ENCODE measurements at regions of chr4 and their contacts with region 1.

Region 1: GRCh38 chr4:134470544-134470943 is 269.0 kb upstream of the PABPC4L start:
- DNase-seq: peak; percentile 42 to 44
- H3K4me3 ChIP-seq: no peak overlapping the region
- H3K4me3 Mint-ChIP-seq: no peak overlapping the region
- H3K27ac Mint-ChIP-seq: no peak overlapping the region
- H3K4me1 ChIP-seq: no peaks in the 10 kb centered on the region
- H3K4me1 Mint-ChIP-seq: no peaks in the 10 kb centered on the region
- H3K27me3 ChIP-seq: no peaks in the 10 kb centered on the region
- H3K27me3 Mint-ChIP-seq: no peaks in the 10 kb centered on the region
- CTCF ChIP-seq: peak; percentile 44 to 56

Region 2: GRCh38 chr4:134650461-134650860 is 179.9 kb after region 1 on chr4:
- CTCF ChIA-PET with region 1: no interaction called
- POLR2A ChIA-PET with region 1: no interaction called
- intact Hi-C with region 1: loop called (anchors 1 kb)
- DNase-seq: no peak
- H3K4me3 ChIP-seq: no peak overlapping the region
- H3K4me3 Mint-ChIP-seq: no peak overlapping the region
- H3K27ac Mint-ChIP-seq: no peak overlapping the region
- H3K4me1 ChIP-seq: no peaks in the 10 kb centered on the region
- H3K4me1 Mint-ChIP-seq: no peaks in the 10 kb centered on the region
- H3K27me3 ChIP-seq: no peaks in the 10 kb centered on the region
- H3K27me3 Mint-ChIP-seq: no peaks in the 10 kb centered on the region
- CTCF ChIP-seq: no peak

Region 3: DNA sequence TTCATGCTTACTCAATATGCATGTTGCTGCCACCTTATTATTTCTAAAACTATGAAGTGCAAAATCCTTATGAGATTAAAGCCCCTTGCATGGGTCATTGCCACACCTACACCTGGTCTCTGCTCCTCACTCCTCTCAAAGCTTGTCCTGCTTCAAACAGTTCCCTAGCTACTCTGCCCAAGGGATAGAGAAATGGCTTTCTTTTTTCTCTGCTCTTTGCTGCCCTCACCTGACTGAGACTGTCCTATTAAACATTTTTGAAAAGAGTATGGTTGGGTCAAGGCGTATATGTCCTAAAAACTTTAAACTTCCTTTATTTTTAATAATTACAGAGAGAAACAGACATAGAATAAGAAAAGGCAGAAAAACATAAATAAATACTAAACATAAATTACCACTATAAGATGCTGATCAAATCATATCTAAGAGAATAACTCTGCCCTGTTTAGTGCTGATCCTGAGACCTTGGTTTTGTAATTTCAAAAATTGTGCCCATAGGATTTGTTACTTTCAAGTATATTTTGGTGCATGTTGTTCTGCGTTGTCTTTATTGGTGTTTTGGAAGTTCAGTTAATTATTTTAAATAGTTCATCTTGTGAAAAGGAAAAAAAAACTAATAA is 436.0 kb after region 1 on chr4:
- CTCF ChIA-PET with region 1: interaction called, 7 read pairs
- POLR2A ChIA-PET with region 1: no interaction called
- intact Hi-C with region 1: loop called (anchors 1 kb)
- DNase-seq: peak in 1 of 2 experiments; percentile 18
- H3K4me3 ChIP-seq: no peak overlapping the region
- H3K4me3 Mint-ChIP-seq: no peak overlapping the region
- H3K27ac Mint-ChIP-seq: no peak overlapping the region
- H3K4me1 ChIP-seq: no peaks in the 10 kb centered on the region
- H3K4me1 Mint-ChIP-seq: no peaks in the 10 kb centered on the region
- H3K27me3 ChIP-seq: no peaks in the 10 kb centered on the region
- H3K27me3 Mint-ChIP-seq: no peaks in the 10 kb centered on the region
- CTCF ChIP-seq: peak; percentile 42 to 57

Region 4: GRCh38 chr4:134935320-134935719 is 464.8 kb after region 1 on chr4:
- CTCF ChIA-PET with region 1: no interaction called
- POLR2A ChIA-PET with region 1: no interaction called
- intact Hi-C with region 1: loop called (anchors 1 kb)
- DNase-seq: no peak
- H3K4me3 ChIP-seq: no peak overlapping the region
- H3K4me3 Mint-ChIP-seq: no peak overlapping the region
- H3K27ac Mint-ChIP-seq: no peak overlapping the region
- H3K4me1 ChIP-seq: no peaks in the 10 kb centered on the region
- H3K4me1 Mint-ChIP-seq: no peaks in the 10 kb centered on the region
- H3K27me3 ChIP-seq: no peaks in the 10 kb centered on the region
- H3K27me3 Mint-ChIP-seq: peaks cover 2% of the 10 kb centered on the region
- CTCF ChIP-seq: no peak

Measured in Caco-2 (cell line).